Activated naive CD4-positive, alpha-beta T cell treated with anti-CD3 and anti-CD28 coated beads for 36 hours (primary cell): ENCODE measurements at regions of chr2 and their contacts with region 1.

Region 1: GRCh38 chr2:231701456-231702373 is 6.6 kb upstream of the PTMA start:
- DNase-seq: no peak
- H3K4me3 Mint-ChIP-seq: no peak overlapping the region
- H3K27ac Mint-ChIP-seq: no peak overlapping the region
- H3K4me1 Mint-ChIP-seq: peaks cover 12% of the 10 kb centered on the region
- H3K27me3 Mint-ChIP-seq: no peaks in the 10 kb centered on the region

Region 2: DNA sequence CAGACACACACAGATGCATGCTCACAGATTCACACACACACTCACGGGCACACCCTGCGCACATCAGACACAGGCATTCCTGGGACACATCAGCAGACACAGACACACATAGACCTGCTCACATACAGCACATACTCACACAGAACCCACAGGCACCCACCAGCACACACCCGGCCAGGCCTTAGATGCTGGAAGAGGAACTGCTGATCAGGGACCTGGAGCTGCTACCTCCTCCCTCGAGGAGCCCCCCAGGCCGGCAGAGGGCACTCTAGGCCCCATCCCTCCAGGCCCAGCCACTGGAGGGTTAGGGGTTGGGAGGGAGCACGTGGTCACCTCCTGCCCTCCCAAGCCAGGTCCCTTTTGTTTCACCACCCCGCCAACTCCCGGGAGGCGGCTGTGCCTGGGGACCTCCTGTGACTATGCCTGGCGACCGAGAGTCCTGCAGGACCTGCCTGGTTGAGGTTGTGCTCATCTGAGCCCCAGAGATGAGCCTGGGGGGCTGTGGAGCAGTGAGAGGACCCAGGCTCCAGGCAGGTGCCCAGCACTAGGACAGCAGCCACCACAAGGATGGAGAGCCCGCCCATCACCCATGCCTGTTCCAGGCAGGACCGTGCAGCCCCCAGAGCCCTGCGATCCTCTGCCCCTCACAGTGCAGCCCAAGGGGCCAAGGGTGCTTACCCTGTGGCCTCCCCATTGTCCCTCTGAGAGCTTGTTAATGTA is 14.4 kb before region 1 on chr2:
- CTCF ChIA-PET with region 1: interaction called, 17 read pairs
- intact Hi-C with region 1: no loop called
- DNase-seq: peak; percentile 72
- H3K4me3 Mint-ChIP-seq: no peak overlapping the region
- H3K27ac Mint-ChIP-seq: no peak overlapping the region
- H3K4me1 Mint-ChIP-seq: peaks cover 6% of the 10 kb centered on the region
- H3K27me3 Mint-ChIP-seq: peaks cover 6% of the 10 kb centered on the region